Caco-2 (cell line): ENCODE measurements at regions of chr4 and their contacts with region 1.

Region 1: DNA sequence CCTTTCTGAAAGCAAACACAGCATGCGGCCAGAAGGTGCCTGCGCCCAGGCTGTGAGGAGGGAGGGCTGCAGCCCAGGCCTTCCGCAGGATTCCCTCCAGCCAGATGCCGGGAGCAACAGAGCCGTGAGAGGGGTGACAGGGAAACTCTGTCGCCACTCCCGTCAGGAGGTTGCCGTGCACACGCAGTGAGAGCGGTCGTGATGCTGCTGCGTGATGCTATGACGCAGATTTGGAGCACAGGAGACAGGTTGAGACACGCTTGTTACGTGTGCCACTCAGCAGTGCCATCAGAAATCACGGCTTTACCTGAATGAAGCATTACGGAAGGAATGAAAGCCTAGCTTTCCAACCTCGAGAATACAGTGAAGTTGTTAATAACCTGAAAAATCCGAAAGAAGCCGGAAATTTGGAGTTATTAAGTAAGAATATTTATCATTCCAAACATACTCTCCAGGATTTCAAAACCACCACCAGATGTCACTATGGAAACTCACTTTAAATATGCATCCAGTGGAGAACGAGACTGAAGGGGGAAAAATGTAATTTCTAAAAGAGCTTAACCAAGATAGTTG is 54.4 kb downstream of the FAT1 start:
- DNase-seq: peak in 1 of 2 experiments; percentile 32
- H3K4me3 ChIP-seq: no peak overlapping the region
- H3K4me3 Mint-ChIP-seq: no peak overlapping the region
- H3K27ac Mint-ChIP-seq: no peak overlapping the region
- H3K4me1 ChIP-seq: peaks cover 15% of the 10 kb centered on the region; the same call in 1 of the 2 replicates
- H3K4me1 Mint-ChIP-seq: peaks cover 9% of the 10 kb centered on the region
- H3K27me3 ChIP-seq: no peaks in the 10 kb centered on the region
- H3K27me3 Mint-ChIP-seq: no peaks in the 10 kb centered on the region
- CTCF ChIP-seq: peak; percentile 37 to 48

Region 2: DNA sequence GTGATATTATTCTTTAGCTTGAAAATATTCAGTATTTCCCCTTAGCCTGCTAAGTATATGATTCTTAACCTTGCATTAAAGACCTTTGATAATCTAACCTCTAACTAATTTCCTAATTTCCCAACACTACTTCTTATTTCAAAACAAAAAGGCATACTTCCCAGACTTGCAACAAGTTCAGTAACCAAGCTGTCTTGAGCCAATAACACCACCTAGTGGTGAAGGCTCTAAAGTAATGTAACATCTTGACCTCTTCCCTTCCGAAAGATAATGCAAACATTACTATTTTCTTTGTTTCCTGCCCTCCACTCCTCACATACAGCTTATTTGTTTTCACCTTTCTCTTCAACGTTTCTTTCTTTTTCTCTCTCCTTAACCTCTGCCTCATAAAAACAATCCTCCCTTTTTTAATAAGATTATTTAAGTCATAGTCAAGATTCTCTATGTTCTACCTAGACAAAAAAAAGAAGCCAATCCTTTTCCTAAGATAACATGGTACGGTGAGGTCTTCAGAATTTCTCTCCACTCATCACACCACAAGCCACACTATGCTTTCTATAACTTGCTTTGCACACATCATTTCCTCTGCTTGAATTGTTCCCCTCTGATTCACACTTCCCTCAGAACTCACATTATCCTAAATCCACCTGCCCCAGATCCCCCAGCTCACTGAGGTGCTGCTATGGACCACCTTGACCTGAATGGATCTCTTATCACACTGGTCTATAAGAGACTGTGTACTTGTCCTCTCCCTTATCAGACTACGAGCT is 50.9 kb after region 1 on chr4:
- CTCF ChIA-PET with region 1: interaction called, 6 read pairs
- POLR2A ChIA-PET with region 1: interaction called, 7 read pairs
- intact Hi-C with region 1: loop called (anchors 1 kb)
- DNase-seq: peak in 1 of 2 experiments; percentile 72
- H3K4me3 ChIP-seq: no peak overlapping the region
- H3K4me3 Mint-ChIP-seq: no peak overlapping the region
- H3K27ac Mint-ChIP-seq: no peak overlapping the region
- H3K4me1 ChIP-seq: no peaks in the 10 kb centered on the region
- H3K4me1 Mint-ChIP-seq: no peaks in the 10 kb centered on the region
- H3K27me3 ChIP-seq: no peaks in the 10 kb centered on the region
- H3K27me3 Mint-ChIP-seq: no peaks in the 10 kb centered on the region
- CTCF ChIP-seq: peak; percentile 45 to 56

Region 3: GRCh38 chr4:186946682-186947294 is 277.5 kb after region 1 on chr4:
- CTCF ChIA-PET with region 1: no interaction called
- POLR2A ChIA-PET with region 1: no interaction called
- intact Hi-C with region 1: loop called (anchors 1 kb)
- DNase-seq: peak; percentile 72
- H3K4me3 ChIP-seq: no peak overlapping the region
- H3K4me3 Mint-ChIP-seq: no peak overlapping the region
- H3K27ac Mint-ChIP-seq: no peak overlapping the region
- H3K4me1 ChIP-seq: no peaks in the 10 kb centered on the region
- H3K4me1 Mint-ChIP-seq: peaks cover 5% of the 10 kb centered on the region
- H3K27me3 ChIP-seq: no peaks in the 10 kb centered on the region
- H3K27me3 Mint-ChIP-seq: peaks cover 3% of the 10 kb centered on the region
- CTCF ChIP-seq: peak; percentile 50 to 84